AG04449 (cell line): ENCODE measurements at regions of chr7 and their contacts with region 1.

Region 1: DNA sequence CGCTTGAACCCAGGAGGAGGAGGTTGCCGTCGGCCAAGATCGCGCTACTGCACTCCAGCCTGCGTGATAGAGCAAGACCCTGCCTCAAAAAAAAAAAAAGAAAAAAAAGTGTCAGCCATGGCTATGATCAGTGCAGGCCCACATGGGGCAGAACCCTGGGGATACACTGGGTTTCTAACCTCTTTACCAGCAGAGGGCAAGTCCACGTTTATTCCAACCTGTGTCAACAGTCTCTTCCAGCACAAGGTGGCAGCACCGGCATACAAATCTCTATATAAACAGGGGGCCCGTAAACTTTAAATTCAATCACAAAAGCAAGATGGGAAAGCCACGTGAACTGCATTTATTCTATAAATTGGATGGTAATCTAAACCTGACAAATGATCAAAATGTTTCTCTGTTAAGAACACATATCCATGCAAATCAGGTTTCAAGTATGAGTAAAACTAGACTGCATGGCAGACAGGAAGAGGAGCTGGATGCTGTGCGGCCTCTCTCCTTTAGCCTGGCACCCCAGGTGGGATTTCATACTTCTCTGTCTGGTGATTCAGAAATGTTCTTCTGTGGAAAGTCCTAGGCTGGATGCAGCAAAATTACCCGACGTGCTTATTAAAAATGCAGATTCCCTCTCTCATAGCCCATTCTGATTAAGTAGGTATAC is 60.0 kb upstream of the STEAP1B start:
- DNase-seq: no peak
- H3K4me3 ChIP-seq: no peak overlapping the region
- CTCF ChIP-seq: peak; percentile 83

Region 2: DNA sequence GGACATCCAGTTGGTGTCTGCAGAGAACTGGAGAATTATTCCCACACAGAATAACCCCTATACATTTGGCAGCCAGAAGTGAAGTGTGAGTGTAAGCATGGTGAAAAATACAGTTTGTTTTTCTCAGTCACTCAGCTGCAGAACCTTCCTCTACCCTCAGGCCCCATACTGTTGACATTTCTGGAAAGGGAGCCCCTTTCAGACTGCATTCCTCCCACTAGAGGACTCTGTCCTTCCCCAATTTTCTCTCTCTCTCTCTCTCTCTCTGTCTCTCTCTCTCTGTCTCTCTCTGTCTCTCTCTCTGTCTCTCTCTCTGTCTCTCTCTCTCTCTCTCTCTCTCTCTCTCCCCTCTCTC is 26.8 kb after region 1 on chr7:
- CTCF ChIA-PET with region 1: interaction called, 16 read pairs
- POLR2A ChIA-PET with region 1: no interaction called
- DNase-seq: no peak
- H3K4me3 ChIP-seq: no peak overlapping the region
- CTCF ChIP-seq: peak; percentile 39

Region 3: DNA sequence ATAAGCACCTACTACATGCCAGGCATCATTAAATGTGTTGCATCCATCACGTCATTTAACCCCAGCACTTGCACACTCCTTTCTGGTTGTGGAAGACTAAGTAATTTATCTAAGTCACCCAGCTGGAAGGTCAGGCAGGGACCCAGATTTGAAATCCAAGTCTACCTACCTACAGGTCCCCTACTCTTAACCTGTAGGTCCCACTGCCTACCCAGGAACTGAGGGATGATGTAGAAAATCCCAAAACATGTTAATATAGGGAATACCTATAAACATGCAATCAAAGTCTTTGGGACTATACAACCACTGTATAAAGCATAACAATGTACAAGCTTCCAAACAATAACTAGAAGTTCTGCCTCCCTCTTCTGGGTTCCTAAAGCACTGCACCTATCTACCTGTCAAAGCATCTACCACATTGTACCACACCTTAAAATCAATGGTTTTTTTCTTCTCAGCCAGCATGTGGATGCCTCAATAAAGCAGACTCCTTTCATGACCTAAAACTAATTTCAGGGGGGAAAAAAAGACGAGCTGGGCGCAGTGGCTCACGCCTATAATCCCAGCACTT is 172.7 kb after region 1 on chr7:
- CTCF ChIA-PET with region 1: interaction called, 202 read pairs
- POLR2A ChIA-PET with region 1: interaction called, 44 read pairs
- DNase-seq: no peak
- H3K4me3 ChIP-seq: no peak overlapping the region
- CTCF ChIP-seq: peak; percentile 24

Region 4: DNA sequence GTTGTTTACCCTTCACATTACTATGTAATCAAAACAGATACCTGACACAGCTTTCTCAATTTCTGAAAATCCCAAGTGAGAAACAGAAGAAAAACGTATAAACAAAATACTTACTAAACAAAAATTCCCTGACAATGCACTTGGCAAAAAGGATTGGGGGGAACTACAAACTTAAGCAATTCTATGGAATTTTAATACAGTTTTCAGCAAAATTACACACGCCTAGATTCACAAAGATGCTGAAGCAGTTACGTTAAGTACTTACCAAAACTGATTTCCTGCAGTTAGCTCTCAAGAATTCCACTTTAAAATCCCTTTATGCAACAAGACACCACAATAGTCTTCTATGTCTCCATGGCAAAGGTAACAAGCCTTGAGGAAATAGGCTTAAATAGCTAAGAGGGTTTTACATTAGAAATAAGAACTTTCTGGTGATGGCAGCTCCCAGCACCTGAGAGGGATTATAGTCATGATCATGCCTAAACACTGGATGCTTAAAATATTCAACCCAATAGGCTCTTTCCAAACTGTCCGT is 251.9 kb after region 1 on chr7:
- CTCF ChIA-PET with region 1: interaction called, 13 read pairs
- POLR2A ChIA-PET with region 1: no interaction called
- DNase-seq: no peak
- H3K4me3 ChIP-seq: no peak overlapping the region
- CTCF ChIP-seq: no peak

Region 5: DNA sequence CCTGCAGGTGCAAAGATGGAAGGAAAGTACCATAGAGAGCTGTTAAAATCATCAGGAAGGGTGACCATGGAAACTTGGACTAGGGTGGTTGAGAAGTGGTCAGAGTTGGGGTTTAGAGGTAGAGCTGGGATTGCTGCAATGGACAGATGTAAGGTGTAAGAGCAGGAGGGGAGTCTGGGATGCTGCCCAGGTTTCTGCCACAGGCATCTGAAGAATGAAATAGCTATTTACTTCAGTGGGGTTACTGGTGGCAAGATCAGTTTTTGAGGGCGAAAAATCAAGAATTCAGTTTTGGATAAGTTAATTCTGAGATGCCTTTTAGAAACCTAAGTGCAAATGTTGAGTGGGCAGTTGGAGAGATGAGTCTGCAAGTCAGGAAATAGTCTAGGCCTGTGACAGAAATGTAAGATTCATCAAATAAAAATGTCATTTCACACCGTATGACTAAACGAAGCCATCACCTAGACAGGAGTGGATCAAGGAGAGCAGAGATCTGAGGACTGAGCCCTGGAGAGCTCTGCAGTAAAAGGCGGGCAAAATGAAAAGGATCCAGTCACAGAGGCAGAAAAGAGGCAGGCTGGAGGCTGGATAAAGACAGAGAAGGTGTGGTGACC is 285.4 kb after region 1 on chr7:
- CTCF ChIA-PET with region 1: interaction called, 10 read pairs
- POLR2A ChIA-PET with region 1: no interaction called
- DNase-seq: no peak
- H3K4me3 ChIP-seq: no peak overlapping the region
- CTCF ChIP-seq: no peak

Region 6: DNA sequence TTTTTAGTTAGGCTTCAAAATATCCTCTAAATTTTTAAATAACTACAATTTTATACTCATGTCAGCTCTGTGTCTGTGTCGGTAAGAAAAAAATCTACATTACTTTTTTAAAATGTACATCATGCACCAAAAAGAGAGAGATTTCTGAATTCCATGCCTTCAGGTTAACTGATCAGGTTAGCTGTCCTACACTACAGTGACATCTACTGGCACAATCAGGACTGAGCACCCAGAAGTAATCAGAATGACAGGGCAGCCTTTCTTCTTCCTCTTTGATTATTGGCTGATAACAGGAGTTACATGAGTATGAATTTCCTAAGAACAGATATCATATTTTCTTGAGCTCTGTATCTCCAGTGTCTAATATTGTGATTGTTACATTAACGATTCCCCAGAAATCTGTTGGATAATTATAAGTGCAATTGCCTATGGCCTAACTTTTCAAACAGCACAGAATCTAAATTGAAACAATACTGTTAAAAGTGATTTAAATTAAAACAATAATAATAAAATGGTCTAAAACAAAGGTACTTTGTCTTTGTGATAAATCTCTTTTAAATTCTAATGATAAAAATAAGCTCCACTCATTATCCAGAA is 495.7 kb after region 1 on chr7:
- CTCF ChIA-PET with region 1: interaction called, 276 read pairs
- POLR2A ChIA-PET with region 1: no interaction called
- DNase-seq: no peak
- H3K4me3 ChIP-seq: no peak overlapping the region
- CTCF ChIP-seq: peak; percentile 76

Region 7: DNA sequence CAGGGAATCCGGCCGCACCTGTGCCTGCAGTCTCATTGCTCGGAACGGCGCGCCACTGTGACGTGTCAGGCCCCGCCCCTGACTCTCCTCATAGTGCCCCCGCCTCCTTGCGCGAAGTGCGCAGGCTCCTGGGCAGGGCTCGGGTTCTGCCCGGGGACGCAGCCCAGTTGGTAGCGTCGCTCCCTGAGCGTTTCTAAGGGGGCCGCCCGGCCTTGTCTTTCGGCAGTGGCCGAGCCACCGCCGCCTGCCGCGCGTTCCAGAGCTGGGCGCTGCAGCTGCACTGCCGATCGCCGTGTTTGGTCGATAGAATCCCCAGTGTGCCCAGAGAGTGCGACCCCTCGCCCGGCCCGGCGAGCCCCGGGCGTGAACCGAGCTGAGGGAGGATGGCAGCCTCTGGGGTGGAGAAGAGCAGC is 545.7 kb after region 1 on chr7 and contains the start of gene KLHL7:
- CTCF ChIA-PET with region 1: interaction called, 11 read pairs
- POLR2A ChIA-PET with region 1: no interaction called
- DNase-seq: no peak
- H3K4me3 ChIP-seq: peak within 1 kb of the TSS; percentile 96
- CTCF ChIP-seq: no peak